ENCODE measurements at regions of chr2 and their contacts with region 1.

Region 1: DNA sequence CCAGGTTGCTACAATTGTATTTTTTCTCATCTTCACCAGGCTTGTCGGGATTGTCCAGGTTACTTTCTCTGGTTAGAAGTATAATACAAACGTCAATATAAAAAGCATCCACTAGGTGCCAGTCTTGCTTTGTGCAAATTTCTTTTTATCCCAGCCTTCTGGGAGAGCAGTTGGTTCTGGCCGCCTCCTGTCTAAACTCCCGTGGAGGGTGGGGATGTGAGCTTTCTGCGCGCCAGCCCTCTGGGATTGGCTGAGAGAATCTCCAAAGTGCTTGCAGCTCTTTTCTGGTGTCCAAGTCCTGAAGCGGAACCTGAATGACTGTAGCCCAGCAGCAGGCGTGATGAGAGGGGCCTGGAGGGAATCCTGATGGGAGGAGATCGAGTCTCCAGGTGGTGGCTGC is 22.4 kb upstream of the TOGARAM2 start:
- H3K4me3 Mint-ChIP-seq: no peak overlapping the region
- H3K27ac Mint-ChIP-seq: no peak overlapping the region
- H3K4me1 Mint-ChIP-seq: peaks cover 20% of the 10 kb centered on the region
- H3K27me3 Mint-ChIP-seq: peaks cover 1% of the 10 kb centered on the region

Region 2: DNA sequence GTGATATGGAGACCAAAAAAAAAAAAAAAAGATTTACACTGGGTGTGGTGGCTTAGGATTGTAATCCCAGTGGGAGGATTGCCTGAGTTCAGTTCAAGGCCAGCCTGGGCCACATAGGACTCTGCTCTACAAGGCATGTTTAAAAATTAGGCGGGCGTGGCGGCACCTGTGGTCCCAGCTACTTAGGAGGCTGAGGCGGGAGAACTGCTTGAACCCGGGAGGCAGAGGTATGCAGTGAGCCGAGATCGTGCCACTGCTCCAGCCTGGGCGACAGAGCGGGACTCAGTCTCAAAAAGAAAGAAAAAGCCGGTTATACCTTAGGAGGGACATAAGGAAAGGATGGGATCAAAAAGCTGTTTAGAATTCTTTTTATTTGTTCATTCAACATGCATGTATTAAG is 148.8 kb before region 1 on chr2:
- intact Hi-C with region 1: no loop called
- H3K4me3 Mint-ChIP-seq: peak overlapping the region; percentile 83
- H3K27ac Mint-ChIP-seq: peak overlapping the region; percentile 17
- H3K4me1 Mint-ChIP-seq: peaks cover 18% of the 10 kb centered on the region
- H3K27me3 Mint-ChIP-seq: peaks cover 13% of the 10 kb centered on the region

Region 3: GRCh38 chr2:28976584-28976983 is 17.9 kb after region 1 on chr2:
- intact Hi-C with region 1: no loop called
- H3K4me3 Mint-ChIP-seq: no peak overlapping the region
- H3K27ac Mint-ChIP-seq: no peak overlapping the region
- H3K4me1 Mint-ChIP-seq: peaks cover 12% of the 10 kb centered on the region
- H3K27me3 Mint-ChIP-seq: peaks cover 2% of the 10 kb centered on the region

Region 4: GRCh38 chr2:29014811-29015421 is 56.2 kb after region 1 on chr2:
- intact Hi-C with region 1: loop called (anchors 5 kb)
- H3K4me3 Mint-ChIP-seq: no peak overlapping the region
- H3K27ac Mint-ChIP-seq: peak overlapping the region; percentile 47
- H3K4me1 Mint-ChIP-seq: peaks cover 59% of the 10 kb centered on the region
- H3K27me3 Mint-ChIP-seq: peaks cover 48% of the 10 kb centered on the region

Region 5: GRCh38 chr2:29196792-29197788 is 238.4 kb after region 1 on chr2:
- intact Hi-C with region 1: loop called (anchors 1 kb)
- H3K4me3 Mint-ChIP-seq: no peak overlapping the region
- H3K27ac Mint-ChIP-seq: no peak overlapping the region
- H3K4me1 Mint-ChIP-seq: peaks cover 16% of the 10 kb centered on the region
- H3K27me3 Mint-ChIP-seq: peaks cover 2% of the 10 kb centered on the region

Region 6: DNA sequence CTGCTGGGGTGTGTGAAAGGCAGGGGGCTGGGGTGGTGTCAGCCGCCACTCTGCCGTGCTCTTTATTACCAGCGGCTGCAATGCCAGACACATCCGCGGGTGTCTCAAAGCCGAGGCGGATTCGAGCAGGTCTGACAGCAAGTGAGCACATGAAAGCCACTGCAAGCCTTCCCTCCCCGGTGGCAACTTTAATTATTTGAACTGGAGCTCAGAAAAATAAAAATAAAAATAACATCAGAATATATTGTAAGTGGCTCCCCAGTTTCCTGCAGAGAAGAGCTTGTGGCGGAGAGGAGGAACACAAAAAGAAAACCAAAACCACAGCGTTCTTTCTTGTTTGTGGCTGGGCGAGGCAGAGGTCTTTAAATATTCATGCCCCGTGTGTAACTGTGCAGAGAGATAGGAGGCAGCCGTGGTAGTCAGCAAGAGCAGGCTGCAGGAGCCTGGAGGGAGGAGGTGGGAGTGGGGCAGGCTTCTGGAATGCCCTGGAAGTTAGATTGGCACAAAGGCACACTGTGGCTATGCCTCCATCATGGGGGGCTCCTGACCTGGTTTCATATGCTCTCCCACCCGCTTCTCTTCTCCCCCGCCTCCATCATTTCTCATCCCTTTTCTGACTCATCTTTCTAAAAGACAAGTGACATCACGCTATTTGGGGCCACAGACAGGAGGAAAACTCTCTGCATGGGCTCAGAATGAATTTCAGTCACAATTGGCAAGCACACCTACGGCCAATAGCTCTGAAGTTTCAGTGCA is 356.3 kb after region 1 on chr2:
- intact Hi-C with region 1: loop called (anchors 5 kb)
- H3K4me3 Mint-ChIP-seq: peak overlapping the region; percentile 50
- H3K27ac Mint-ChIP-seq: peak overlapping the region; percentile 21
- H3K4me1 Mint-ChIP-seq: peaks cover 75% of the 10 kb centered on the region
- H3K27me3 Mint-ChIP-seq: peaks cover 38% of the 10 kb centered on the region

Region 7: GRCh38 chr2:29841386-29842004 is 882.8 kb after region 1 on chr2:
- intact Hi-C with region 1: loop called (anchors 5 kb)
- H3K4me3 Mint-ChIP-seq: no peak overlapping the region
- H3K27ac Mint-ChIP-seq: no peak overlapping the region
- H3K4me1 Mint-ChIP-seq: no peaks in the 10 kb centered on the region
- H3K27me3 Mint-ChIP-seq: peaks cover 4% of the 10 kb centered on the region

Region 8: DNA sequence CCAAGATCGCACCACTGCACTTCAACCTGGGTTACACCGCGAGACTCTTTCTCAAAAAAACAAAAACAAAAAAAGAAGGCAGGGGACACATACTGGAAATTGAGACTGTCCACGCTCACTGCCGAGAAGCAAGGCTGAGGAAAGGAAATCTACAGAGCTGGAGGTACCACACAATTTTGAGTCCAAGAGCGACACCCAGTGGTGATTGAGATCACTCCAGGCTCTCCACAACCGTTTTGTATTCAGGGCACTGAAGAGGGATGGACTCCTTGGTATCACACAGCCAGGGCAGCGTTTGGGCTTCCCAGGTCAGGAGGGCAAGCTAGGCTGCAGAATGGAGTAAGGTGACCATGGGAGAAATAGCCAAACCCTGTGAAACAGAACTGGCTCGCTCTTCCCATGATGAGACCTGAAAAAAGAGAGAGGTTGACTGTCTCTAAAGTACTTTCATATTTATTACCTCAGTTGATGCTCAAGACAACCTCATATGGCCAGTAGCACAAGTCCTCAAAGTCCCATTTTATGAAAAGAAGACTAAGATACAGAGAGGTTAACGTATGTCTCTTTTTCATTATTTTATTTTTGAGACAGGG is 1113.7 kb after region 1 on chr2:
- intact Hi-C with region 1: loop called (anchors 5 kb)
- H3K4me3 Mint-ChIP-seq: no peak overlapping the region
- H3K27ac Mint-ChIP-seq: no peak overlapping the region
- H3K4me1 Mint-ChIP-seq: no peaks in the 10 kb centered on the region
- H3K27me3 Mint-ChIP-seq: peaks cover 24% of the 10 kb centered on the region